Panc1 (cell line): ENCODE measurements at regions of chr14 and their contacts with region 1.

Region 1: GRCh38 chr14:45902241-45902640 is 649.2 kb upstream of the MIS18BP1 start:
- DNase-seq: no peak
- ATAC-seq: no peak
- H3K4me3 ChIP-seq: no peak overlapping the region
- H3K27ac ChIP-seq: no peak overlapping the region
- H3K4me1 ChIP-seq: no peaks in the 10 kb centered on the region
- H3K27me3 ChIP-seq: no peaks in the 10 kb centered on the region
- CTCF ChIP-seq: no peak

Region 2: DNA sequence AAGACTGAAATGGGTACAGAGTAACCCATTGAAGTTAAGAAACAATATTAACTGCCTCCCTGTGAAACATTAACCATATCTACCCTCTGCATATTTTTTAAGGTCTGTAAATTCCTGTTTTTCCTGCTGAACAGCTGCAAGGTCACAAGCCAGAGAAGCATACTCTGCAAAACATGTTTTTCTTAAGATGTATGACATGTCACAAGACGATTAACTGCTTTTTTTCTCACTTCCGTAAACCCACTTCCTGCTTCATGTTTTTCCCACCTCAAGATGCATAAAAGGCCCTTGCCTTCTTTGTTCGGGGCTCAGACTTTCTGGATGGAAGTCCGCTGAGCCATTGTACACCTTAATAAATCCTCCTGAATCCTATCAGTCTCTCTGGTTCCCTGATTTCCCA is 144.6 kb before region 1 on chr14:
- CTCF ChIA-PET with region 1: no interaction called
- POLR2A ChIA-PET with region 1: no interaction called
- in situ Hi-C with region 1: no loop called
- intact Hi-C with region 1: loop called (anchors 5 kb)
- DNase-seq: no peak
- ATAC-seq: no peak
- H3K4me3 ChIP-seq: no peak overlapping the region
- H3K27ac ChIP-seq: no peak overlapping the region
- H3K4me1 ChIP-seq: no peaks in the 10 kb centered on the region
- H3K27me3 ChIP-seq: no peaks in the 10 kb centered on the region
- CTCF ChIP-seq: no peak